ENCODE measurements at regions of chr9 and their contacts with region 1.

Region 1: GRCh38 chr9:36250079-36250478 is 8.2 kb downstream of the GNE start:
- DNase-seq: no peak
- H3K4me3 ChIP-seq: no peak overlapping the region
- H3K27ac ChIP-seq: no peak overlapping the region
- H3K4me1 ChIP-seq: no peaks in the 10 kb centered on the region
- H3K27me3 ChIP-seq: no peaks in the 10 kb centered on the region
- CTCF ChIP-seq: no peak

Region 2: DNA sequence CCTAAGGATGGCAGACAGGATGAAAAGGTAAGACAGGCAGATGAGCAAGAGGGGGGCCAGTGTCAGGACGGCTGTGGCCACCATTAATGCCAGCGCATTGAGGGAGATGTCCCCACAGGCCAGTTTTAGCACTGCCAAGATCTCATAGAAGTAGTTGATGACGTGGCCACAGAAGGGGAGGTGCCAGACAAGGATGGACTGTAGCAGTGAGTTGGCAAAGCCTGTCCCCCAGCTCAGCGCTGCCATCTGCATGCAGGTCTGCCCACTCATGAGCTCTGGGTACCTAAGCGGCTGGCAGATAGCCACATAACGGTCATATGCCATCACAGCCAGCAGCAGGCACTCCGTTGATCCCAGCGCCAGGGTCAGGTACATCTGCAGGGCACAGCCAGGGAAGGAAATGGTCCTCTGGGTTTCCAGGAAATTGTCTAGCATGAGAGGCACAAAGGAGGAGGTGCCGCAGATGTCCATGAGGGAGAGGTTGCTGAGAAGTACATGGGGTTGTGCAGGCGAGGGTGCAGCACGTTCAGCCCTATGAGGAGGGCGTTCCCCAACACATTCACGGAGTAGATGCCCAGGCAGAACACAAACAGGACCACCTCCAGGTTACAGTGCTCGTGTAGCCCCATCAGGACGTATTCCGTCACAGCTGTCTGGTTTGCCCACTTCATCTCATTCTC is 390.6 kb before region 1 on chr9:
- CTCF ChIA-PET with region 1: no interaction called
- POLR2A ChIA-PET with region 1: no interaction called
- intact Hi-C with region 1: no loop called
- DNase-seq: peak; percentile 22
- H3K4me3 ChIP-seq: no peak overlapping the region
- H3K27ac ChIP-seq: no peak overlapping the region
- H3K4me1 ChIP-seq: no peaks in the 10 kb centered on the region
- H3K27me3 ChIP-seq: no peaks in the 10 kb centered on the region
- CTCF ChIP-seq: no peak

Region 3: GRCh38 chr9:35945341-35946018 is 304.6 kb before region 1 on chr9:
- CTCF ChIA-PET with region 1: no interaction called
- POLR2A ChIA-PET with region 1: no interaction called
- intact Hi-C with region 1: no loop called
- DNase-seq: peak; percentile 96
- H3K4me3 ChIP-seq: peak overlapping the region; percentile 30
- H3K27ac ChIP-seq: no peak overlapping the region
- H3K4me1 ChIP-seq: peaks cover 5% of the 10 kb centered on the region
- H3K27me3 ChIP-seq: no peaks in the 10 kb centered on the region
- CTCF ChIP-seq: peak; percentile 88

Region 4: GRCh38 chr9:36023260-36024048 is 226.6 kb before region 1 on chr9:
- CTCF ChIA-PET with region 1: no interaction called
- POLR2A ChIA-PET with region 1: no interaction called
- intact Hi-C with region 1: no loop called
- DNase-seq: peak; percentile 71
- H3K4me3 ChIP-seq: no peak overlapping the region
- H3K27ac ChIP-seq: no peak overlapping the region
- H3K4me1 ChIP-seq: no peaks in the 10 kb centered on the region
- H3K27me3 ChIP-seq: no peaks in the 10 kb centered on the region
- CTCF ChIP-seq: peak; percentile 87

Region 5: DNA sequence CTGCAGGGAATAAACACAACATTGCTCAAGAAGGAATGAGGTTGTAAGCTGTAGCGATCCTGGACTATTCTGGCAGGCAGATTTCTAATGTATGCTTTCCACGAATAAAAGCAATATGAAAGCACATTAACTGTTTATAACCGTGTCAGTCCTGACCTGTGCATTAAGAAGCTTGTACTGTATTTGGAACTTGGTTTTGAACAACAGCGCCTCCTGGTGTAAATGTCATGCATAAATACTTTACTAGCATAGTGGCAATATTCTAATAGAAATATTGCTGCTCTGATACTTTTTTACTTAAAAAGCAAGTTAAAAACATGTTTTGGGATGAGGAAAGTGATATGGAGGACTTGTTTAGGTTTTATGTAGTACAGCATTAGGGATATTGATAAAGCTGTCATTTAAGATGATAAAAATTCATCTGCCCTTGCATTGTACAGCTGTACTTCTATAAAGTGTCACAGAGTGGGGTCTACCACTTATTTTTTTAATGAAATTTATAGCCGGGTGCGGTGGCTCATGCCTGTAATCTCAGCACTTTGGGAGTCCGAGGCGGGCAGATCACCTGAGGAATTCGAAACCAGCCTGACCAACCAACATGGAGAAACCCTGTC is 78.8 kb after region 1 on chr9:
- CTCF ChIA-PET with region 1: no interaction called
- POLR2A ChIA-PET with region 1: no interaction called
- intact Hi-C with region 1: loop called (anchors 1 kb)
- DNase-seq: peak; percentile 80
- H3K4me3 ChIP-seq: peak overlapping the region; percentile 15
- H3K27ac ChIP-seq: no peak overlapping the region
- H3K4me1 ChIP-seq: no peaks in the 10 kb centered on the region
- H3K27me3 ChIP-seq: no peaks in the 10 kb centered on the region
- CTCF ChIP-seq: peak; percentile 86

Measured in A673 (cell line).